ENCODE measurements at regions of chr5 and their contacts with region 1.

Region 1: DNA sequence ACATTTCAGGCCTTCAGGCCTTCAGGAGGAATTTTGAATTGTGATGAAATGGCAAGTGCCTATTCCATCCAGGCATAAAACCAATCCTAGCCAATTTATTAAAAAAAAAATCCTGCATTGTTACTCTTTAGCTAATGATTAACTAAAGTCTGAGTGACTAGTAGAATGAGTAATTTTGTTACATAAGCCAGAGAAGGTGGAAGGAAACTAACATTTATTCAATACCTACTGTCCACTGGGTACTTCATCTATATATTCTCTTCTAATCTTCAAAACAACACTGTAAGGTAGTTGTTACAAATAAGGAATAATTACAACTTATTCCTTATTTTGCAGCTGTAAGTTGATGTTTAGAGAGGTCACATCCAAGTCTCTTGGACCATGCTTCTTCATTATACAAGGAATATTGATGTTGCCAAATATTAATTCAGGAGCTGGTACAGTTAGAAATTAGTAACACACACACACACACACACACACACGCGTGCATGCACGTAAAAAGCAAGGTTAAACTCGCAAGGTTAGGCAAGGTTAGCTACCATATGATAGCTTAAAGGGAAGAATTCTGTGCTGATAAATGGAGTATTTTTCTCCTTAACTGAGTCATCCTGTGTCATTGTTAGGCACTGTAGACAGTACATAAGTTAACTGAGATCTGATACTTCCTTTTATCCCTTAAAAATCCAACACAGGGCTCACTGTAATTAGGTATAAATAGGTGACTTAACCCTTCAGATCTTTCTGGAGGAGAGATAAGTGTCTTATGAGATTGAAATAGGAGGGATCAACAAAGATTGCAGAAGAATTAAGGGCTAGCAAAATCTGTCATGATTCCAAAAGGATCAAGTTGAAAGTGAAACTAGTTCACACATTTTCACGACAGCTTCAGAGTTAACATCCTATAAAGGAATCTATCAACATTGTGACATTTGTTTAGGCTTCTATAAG is 596.9 kb downstream of the PDE4D start:
- DNase-seq: no peak
- ATAC-seq: peak in 7 of 8 donors; percentile 41 to 63 (median 50)
- H3K4me3 ChIP-seq: peak overlapping the region in 9 of 10 donors; percentile 12 to 53 (median 38)
- H3K27ac ChIP-seq: peak overlapping the region in 7 of 10 donors; percentile 26 to 87 (median 73)
- H3K4me1 ChIP-seq: peaks cover 0 to 38% (median 29%) of the 10 kb centered on the region in 9 donors
- H3K27me3 ChIP-seq: no peaks in the 10 kb centered on the region
- CTCF ChIP-seq: no peak

Region 2: DNA sequence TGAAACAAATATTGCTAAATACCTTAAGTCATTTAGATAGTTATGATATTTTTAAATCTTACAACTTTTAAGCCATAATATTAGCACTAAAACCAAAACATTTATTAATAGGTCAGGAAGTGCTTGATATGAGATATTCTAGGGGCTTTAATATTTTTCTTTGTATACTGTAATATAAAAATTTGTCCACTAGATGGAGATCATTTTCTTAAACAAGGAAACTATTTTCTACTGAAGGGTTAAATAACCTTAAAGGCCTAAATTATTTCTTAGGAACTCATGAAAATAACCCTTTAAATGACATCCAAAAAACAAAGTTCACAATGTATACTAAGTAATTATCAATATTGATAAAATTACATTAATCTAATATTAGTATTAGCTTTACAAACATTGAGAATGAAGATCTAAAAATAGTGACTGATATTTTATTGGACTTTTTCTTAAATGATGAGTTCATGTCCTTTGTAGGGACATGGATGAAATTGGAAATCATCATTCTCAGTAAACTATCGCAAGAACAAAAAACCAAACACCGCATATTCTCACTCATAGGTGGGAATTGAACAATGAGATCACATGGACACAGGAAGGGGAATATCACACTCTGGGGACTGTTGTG is 78.1 kb before region 1 on chr5:
- intact Hi-C with region 1: no loop called
- DNase-seq: no peak
- ATAC-seq: no peak
- H3K4me3 ChIP-seq: no peak overlapping the region
- H3K27ac ChIP-seq: no peak overlapping the region
- H3K4me1 ChIP-seq: peaks cover 0 to 40% (median 9%) of the 10 kb centered on the region in 9 donors
- H3K27me3 ChIP-seq: no peaks in the 10 kb centered on the region
- CTCF ChIP-seq: peak in 8 of 9 donors; percentile 45 to 65 (median 53)

Region 3: DNA sequence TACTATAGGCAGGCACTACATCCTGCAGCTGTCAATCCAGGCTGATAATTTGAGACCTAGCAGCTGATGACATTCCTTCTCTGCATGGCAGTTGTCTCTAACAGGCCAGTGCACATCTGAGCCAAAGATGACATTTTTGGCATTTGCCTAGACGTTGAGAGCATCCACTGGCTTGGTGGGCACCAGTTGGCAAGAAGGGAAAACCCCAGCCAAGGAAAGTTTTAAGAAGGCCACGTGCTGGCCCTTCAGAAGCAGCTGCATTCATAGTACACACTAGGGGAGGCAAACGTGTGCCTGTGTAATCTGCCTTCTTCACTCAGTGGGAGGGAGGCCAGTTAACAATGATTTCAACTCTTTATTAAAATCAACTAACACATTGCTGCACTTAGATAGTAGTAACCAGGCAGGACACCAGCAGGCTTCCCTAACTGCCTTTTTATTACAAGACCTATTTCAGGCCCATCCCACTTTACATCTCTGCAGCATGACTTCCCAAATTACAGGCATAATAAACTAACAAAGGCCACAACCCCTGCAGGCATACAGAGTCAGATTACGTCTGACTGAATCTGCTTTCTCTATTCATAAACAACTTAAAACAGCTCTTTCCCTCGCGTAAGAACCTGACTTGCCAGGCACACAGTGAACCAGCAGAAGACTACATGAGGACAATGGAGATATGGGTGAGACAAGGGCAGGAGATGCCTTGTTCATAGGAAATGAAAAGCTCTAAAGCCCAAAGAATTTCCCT is 20.6 kb after region 1 on chr5:
- intact Hi-C with region 1: loop called in 1 of 10 experiments (anchors 2 kb)
- DNase-seq: peak in 1 of 2 donors; percentile 29
- ATAC-seq: peak; percentile 44 to 89 (median 64)
- H3K4me3 ChIP-seq: peak overlapping the region in 3 of 10 donors; percentile 2 to 13 (median 3)
- H3K27ac ChIP-seq: peak overlapping the region; percentile 38 to 84 (median 72)
- H3K4me1 ChIP-seq: peaks cover 21 to 83% (median 52%) of the 10 kb centered on the region in 9 donors
- H3K27me3 ChIP-seq: no peaks in the 10 kb centered on the region
- CTCF ChIP-seq: no peak

Measured in heart right ventricle (tissue), 16 donors.